ENCODE measurements at regions of chr11 and their contacts with region 1.

Region 1: GRCh38 chr11:120303004-120303637 is 22.0 kb upstream of the TLCD5 start:
- DNase-seq: peak in 4 of 6 donors; percentile 61 to 81 (median 73)
- ATAC-seq: peak; percentile 55 to 78 (median 74)
- H3K4me3 ChIP-seq: no peak overlapping the region
- H3K27ac ChIP-seq: peak overlapping the region in 2 of 4 donors; percentile 75 to 78
- H3K4me1 ChIP-seq: peaks cover 0 to 5% (median 0%) of the 10 kb centered on the region in 3 donors
- H3K27me3 ChIP-seq: no peaks in the 10 kb centered on the region
- CTCF ChIP-seq: peak; percentile 61 to 92 (median 84)

Region 2: DNA sequence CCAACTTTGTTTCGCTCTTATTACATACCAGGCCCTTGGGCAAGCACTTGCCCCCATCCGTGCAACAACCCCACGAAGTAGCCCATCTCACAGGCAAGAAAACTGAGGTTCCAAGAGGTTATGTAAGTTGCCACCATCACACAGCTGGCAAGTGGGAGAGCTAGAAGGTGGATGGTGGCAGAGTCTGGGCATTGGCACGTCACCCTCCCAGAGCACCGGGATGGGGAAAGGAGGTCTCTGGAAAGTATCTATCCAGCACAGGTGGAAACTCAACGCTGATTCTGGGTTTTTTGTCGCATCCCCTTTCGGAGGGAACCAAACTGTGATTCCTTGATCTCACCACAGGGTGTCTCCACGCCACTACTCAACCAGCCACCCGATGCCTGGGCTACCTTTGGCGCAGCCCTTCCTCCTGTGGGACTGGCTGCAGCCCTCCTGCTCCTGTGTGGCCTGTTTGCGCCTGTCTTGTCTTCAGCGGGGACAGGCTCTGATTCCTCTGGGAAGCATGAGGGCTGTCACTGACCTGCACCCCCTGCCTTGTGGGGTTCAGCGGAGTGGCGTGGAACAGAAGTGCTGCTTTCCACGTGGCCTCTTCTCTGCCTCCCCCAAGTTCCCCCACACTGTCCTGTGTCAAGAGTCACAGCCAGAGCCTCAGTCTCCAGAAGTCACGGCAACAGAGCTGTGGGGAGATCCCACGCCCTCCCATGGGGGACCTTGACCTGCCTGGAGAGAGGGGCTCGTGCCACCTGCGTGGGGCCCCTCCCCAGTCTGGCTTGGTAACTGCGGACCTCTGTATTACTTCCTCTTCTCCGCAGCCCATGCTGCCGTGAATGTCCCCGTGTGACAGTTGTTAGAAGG is 130.8 kb before region 1 on chr11:
- intact Hi-C with region 1: loop called in 2 of 3 experiments (anchors 2 to 5 kb)
- DNase-seq: peak in 5 of 6 donors; percentile 63 to 88 (median 75)
- ATAC-seq: peak; percentile 57 to 78 (median 76)
- H3K4me3 ChIP-seq: no peak overlapping the region
- H3K27ac ChIP-seq: no peak overlapping the region
- H3K4me1 ChIP-seq: peaks cover 0 to 3% (median 0%) of the 10 kb centered on the region in 3 donors
- H3K27me3 ChIP-seq: no peaks in the 10 kb centered on the region
- CTCF ChIP-seq: peak; percentile 71 to 83 (median 74)

Region 3: DNA sequence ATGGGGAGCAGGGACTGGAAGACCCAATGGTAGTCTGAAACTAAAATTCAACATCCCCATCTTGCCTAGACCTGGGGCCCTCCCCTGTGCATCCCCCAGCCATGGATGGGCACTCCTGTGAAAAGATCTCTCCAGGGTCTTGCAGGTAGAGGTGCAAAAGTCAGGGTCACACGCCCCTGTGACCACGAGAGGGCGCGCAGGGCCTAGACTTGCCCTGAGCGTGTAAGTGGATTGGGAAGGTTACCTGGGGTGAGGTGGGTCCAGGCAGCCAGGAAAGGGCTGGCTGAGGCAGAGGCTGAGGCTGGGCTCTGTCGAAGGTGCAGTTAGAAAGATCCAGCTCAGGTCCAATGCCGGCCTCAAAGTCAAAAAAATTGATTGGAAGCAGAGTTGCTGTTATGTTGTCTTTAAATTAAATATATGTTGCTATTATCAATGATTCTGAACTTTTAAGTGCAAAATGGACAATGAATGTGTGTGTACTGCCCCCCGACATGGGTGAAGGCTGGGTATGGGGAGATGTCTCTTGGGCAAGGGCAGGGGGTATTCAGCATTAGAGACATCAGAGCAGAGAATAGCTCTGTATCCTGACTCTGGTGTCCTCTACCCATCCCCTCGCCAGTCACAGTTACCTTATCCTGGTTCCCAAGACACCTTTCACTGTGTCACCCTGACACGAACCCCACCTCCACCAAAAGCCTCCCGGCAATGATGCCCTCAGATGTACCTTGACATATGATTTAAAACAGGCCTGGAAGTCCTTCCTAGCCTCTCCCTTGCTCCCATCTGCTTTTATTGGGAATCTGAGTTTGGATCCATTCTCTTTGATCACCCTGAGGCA is 67.9 kb before region 1 on chr11:
- intact Hi-C with region 1: loop called in 2 of 3 experiments (anchors 5 kb)
- DNase-seq: peak; percentile 66 to 90 (median 82)
- ATAC-seq: peak; percentile 80 to 91 (median 86)
- H3K4me3 ChIP-seq: no peak overlapping the region
- H3K27ac ChIP-seq: no peak overlapping the region
- H3K4me1 ChIP-seq: peaks cover 0 to 2% (median 0%) of the 10 kb centered on the region in 3 donors
- H3K27me3 ChIP-seq: no peaks in the 10 kb centered on the region
- CTCF ChIP-seq: peak; percentile 68 to 85 (median 72)

Region 4: DNA sequence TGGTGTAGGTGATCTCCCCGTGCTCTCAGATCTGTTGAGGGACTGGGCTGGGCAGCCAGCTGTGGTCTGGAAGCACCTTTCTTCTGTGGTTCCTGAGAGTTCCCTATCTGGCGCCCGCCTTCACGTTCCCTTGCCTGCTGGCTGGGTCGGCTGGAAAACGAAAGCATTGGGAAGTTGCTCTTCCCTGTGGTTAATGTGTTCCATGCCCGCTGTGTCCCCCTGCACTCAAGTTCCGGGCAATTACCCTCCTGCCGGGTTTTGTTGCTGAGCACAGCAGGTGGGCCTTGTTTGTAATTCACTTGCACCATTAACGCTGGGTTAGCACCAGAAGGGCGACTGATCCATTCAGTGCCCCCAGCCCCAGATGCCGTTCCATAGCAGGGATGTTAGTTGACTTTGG is 342.5 kb after region 1 on chr11:
- intact Hi-C with region 1: no loop called
- DNase-seq: no peak
- ATAC-seq: peak in 1 of 4 donors; percentile 32
- H3K4me3 ChIP-seq: no peak overlapping the region
- H3K27ac ChIP-seq: no peak overlapping the region
- H3K4me1 ChIP-seq: no peaks in the 10 kb centered on the region
- H3K27me3 ChIP-seq: peaks cover 0 to 4% (median 0%) of the 10 kb centered on the region in 4 donors
- CTCF ChIP-seq: no peak

Measured in pancreas (tissue), 10 donors.